SK-MEL-5 (cell line): ENCODE measurements at regions of chr7 and their contacts with region 1.

Region 1: DNA sequence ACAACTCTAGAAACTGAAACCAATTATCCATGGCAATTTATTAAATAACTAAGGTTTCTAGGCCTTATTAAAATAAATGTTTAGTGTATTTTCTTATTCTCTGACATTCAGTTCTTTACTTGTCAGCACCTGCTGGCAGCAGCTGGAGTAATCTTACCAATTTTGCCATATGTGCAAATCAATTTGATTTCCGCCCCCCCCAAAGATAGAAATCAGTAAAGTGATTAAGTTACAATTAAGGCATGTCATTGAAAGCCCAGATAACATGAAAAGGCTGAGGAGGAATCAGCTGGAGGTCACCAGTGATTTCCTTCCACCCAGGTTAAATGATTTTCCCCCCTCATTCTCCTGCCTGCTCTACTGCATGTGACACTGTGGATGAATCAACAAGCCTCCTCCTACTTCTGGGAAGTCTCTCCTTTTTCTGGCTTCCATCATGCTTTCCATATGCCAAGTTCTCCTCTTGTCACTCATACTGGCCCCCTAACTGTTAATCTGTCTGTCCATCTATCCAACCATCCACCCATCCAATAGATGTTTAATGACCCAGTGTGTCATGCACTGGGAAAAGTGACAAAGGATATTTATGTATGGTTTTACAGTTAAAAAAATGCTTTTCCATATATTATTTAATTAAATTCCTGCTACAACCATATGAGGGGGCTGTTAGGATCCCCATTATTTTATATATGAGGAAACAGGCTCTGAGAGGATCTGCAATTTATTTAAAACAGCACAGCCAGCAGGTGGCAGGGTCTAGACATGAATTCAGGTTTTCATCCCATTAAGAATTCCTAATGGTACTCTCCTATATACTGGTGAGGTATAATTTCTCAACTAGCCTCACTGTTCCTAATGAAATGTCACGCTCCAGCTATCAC is 116.5 kb downstream of the ATXN7L1 start:
- DNase-seq: peak; percentile 76

Region 2: GRCh38 chr7:106041140-106041717 is 281.3 kb after region 1 on chr7:
- in situ Hi-C with region 1: loop called (anchors 25 kb)
- DNase-seq: peak; percentile 87

Region 3: GRCh38 chr7:107014387-107015023 is 1254.6 kb after region 1 on chr7:
- in situ Hi-C with region 1: no loop called
- DNase-seq: peak; percentile 58